Common myeloid progenitor, CD34-positive (primary cell): ENCODE measurements at regions of chr6 and their contacts with region 1.

Region 1: GRCh38 chr6:161101517-161101916 is 109.9 kb downstream of the MAP3K4 start:
- DNase-seq: peak; percentile 11 to 48 (median 41)
- H3K4me3 ChIP-seq: no peak overlapping the region
- H3K27ac ChIP-seq: no peak overlapping the region
- H3K4me1 ChIP-seq: no peaks in the 10 kb centered on the region
- H3K27me3 ChIP-seq: no peaks in the 10 kb centered on the region

Region 2: DNA sequence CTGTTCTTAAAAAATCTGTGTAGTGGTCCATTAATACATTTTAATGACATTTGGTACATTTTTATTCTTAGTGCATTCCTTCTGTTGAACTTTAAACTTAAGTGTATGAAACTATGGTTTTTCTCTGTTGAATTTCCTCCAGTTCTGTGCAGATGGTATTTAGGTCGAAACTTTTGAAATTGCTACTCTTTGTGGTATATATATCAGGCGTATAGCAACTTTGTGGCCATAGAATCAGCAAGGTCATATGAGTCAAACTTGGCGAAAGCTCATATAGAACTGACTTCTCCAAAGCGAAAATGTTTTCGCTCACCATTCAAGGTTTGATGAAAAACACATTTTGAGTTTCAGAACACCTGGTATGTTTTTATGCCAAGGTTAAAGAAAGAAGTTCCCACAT is 16.3 kb before region 1 on chr6:
- CTCF ChIA-PET with region 1: no interaction called
- POLR2A ChIA-PET with region 1: no interaction called
- DNase-seq: no peak
- H3K4me3 ChIP-seq: no peak overlapping the region
- H3K27ac ChIP-seq: no peak overlapping the region
- H3K4me1 ChIP-seq: no peaks in the 10 kb centered on the region
- H3K27me3 ChIP-seq: no peaks in the 10 kb centered on the region

Region 3: DNA sequence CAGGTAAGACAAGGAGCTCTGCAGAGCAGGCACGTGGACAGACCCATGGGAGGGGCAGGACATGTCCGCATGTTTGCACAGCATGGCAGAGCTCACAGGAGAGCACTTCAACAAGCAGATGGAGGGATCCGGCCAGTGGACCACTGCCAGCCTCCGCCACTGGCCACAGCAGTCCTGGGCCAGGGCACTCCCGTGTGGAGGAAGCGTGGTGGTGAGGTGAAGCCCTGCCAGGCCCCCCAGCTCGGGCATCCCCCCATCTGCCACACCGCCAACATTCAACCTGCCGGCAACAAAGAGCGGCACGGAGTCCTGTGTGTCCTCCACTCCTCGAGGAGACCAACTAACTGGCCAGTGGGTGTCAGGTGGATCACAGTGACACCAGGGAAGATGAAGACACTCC is 276.6 kb after region 1 on chr6:
- CTCF ChIA-PET with region 1: interaction called, 69 read pairs
- POLR2A ChIA-PET with region 1: no interaction called
- DNase-seq: no peak
- H3K4me3 ChIP-seq: no peak overlapping the region
- H3K27ac ChIP-seq: no peak overlapping the region
- H3K4me1 ChIP-seq: no peaks in the 10 kb centered on the region
- H3K27me3 ChIP-seq: no peaks in the 10 kb centered on the region